Activated T-helper 1 cell treated with anti-CD3 and anti-CD28 coated beads, Interleukin-12 subunit alpha, Interleukin-12 subunit beta, Interleukin-2, Interleukin-4 antibody, amounts not matched to agents 30 ng/mL and 10 ng/mL and 1 ng/mL, durations not matched to agents 14 hours and 24 hours and 36 hours (primary cell): ENCODE measurements at regions of chr2 and their contacts with region 1.

Region 1: DNA sequence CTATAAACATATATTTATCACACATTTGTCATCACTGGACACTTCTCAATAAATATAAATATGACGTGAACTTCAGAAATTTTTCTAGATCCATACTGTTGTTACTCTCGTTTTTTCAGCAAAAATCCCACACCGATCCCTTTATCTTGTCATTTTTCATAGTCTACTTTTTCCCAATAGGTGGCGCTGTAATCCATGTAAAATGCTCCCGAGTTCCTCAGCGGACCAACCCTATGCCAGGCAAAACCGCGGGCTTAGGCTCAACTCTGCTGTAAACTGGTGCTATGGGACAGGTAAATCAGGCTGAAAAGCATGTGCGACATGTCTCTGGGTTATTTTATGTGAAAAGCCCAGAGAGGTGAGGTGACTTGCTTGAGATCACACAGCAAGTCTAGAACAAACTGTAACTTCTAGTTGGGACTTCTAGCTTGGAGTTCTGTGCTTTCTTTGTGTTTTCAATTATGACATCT is 104.0 kb downstream of the COBLL1 start:
- DNase-seq: no peak
- H3K4me3 Mint-ChIP-seq: no peak overlapping the region
- H3K27ac Mint-ChIP-seq: no peak overlapping the region
- H3K4me1 Mint-ChIP-seq: no peaks in the 10 kb centered on the region
- H3K27me3 Mint-ChIP-seq: peaks cover 7% of the 10 kb centered on the region

Region 2: DNA sequence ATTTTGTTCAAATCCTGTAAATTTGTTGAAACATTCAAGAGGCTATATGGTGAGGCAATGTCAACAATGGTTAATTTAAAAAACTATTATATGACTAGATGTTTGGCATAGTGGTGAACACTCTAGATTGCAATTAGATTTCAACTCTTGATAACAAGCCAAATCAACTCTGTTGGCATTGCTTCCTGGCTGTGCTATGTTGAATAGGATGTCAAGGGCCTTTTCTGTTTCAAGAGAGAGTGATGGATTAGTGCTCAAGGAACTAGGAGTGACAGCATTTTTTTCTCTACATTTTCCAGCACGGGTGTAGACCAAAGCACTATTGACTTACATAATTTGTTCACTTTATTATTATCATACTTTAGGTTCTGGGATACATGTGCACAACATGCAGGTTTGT is 1726.6 kb before region 1 on chr2:
- intact Hi-C with region 1: no loop called
- DNase-seq: no peak
- H3K4me3 Mint-ChIP-seq: no peak overlapping the region
- H3K27ac Mint-ChIP-seq: no peak overlapping the region
- H3K4me1 Mint-ChIP-seq: no peaks in the 10 kb centered on the region
- H3K27me3 Mint-ChIP-seq: no peaks in the 10 kb centered on the region

Region 3: GRCh38 chr2:164145093-164145987 is 592.3 kb before region 1 on chr2:
- intact Hi-C with region 1: no loop called
- DNase-seq: no peak
- H3K4me3 Mint-ChIP-seq: no peak overlapping the region
- H3K27ac Mint-ChIP-seq: no peak overlapping the region
- H3K4me1 Mint-ChIP-seq: no peaks in the 10 kb centered on the region
- H3K27me3 Mint-ChIP-seq: no peaks in the 10 kb centered on the region

Region 4: DNA sequence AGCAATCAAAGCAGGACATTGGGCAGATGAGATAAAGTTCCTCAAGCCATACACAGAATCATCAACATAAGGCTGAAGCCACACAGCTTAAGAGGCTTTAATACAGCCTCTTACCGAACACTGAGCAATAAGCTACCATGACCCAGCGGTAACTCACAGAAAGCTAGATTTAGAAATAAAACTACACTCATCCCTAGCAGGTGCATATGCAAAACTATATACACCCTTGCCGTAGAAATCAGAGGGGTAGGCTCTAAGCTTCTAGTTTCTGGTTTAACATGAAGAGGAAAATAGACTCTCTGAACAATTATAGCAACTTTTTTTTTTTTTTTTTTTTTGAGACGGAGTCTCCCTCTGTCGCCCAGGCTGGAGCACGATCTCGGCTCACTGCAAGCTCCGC is 573.0 kb before region 1 on chr2:
- intact Hi-C with region 1: no loop called
- DNase-seq: no peak
- H3K4me3 Mint-ChIP-seq: no peak overlapping the region
- H3K27ac Mint-ChIP-seq: no peak overlapping the region
- H3K4me1 Mint-ChIP-seq: no peaks in the 10 kb centered on the region
- H3K27me3 Mint-ChIP-seq: no peaks in the 10 kb centered on the region

Region 5: GRCh38 chr2:164910101-164910899 is 172.7 kb after region 1 on chr2:
- intact Hi-C with region 1: loop called (anchors 1 kb)
- DNase-seq: peak; percentile 36
- H3K4me3 Mint-ChIP-seq: no peak overlapping the region
- H3K27ac Mint-ChIP-seq: no peak overlapping the region
- H3K4me1 Mint-ChIP-seq: peaks cover 11% of the 10 kb centered on the region
- H3K27me3 Mint-ChIP-seq: peaks cover 2% of the 10 kb centered on the region

Region 6: GRCh38 chr2:165015052-165015642 is 277.5 kb after region 1 on chr2:
- intact Hi-C with region 1: loop called (anchors 1 kb)
- DNase-seq: peak; percentile 10
- H3K4me3 Mint-ChIP-seq: no peak overlapping the region
- H3K27ac Mint-ChIP-seq: no peak overlapping the region
- H3K4me1 Mint-ChIP-seq: no peaks in the 10 kb centered on the region
- H3K27me3 Mint-ChIP-seq: peaks cover 4% of the 10 kb centered on the region

Region 7: DNA sequence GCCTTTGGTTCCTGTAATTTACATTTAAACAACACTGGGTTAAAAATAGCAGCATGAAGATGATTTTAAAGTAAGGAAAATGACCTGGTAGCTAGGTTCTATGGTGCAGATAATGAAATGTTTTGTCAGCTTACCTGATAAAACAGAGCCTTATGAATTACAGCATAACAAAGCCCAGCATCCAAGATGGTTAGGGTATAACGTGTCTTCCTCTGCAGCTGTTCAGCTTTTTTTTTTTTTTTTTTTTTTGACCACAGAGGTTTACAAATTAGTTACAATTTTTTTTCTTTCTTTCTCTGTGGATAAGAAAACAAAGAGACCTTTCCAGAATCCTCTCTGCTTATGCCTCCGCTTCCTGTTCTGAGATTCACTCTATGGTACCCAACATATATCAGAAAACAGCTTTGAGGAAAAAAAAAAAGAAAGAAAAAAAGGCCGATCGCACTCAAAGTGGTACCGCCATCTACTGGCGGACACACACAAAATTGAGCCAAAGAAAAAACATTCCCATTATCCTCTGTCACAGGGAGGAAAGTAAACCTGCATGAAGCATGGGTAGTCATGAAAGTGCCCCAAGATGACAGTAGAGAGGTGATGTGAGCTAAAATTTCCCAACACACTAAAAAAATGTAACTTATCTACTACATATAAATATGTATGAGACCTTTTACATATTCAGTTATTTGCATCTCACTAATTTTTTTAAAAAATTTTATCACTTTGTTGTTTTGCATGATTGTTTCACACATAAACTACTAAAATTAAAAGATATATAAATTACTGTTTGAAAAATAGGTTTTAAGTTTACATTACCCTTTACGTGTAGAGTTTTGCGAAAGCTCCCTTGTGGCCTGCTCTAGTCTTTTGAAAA is 466.3 kb after region 1 on chr2 and contains the start of gene SCN3A:
- intact Hi-C with region 1: loop called (anchors 5 kb)
- DNase-seq: no peak
- H3K4me3 Mint-ChIP-seq: no peak within 1 kb of the TSS
- H3K27ac Mint-ChIP-seq: no peak within 1 kb of the TSS
- H3K4me1 Mint-ChIP-seq: no peaks in the 10 kb centered on the region
- H3K27me3 Mint-ChIP-seq: peaks cover 2% of the 10 kb centered on the region
- total RNA-seq, gene SCN3A: not detected in 2 replicates